IMR-90 (cell line): ENCODE measurements at regions of chr1 and their contacts with region 1.

Region 1: GRCh38 chr1:62676611-62677356 is 11.4 kb downstream of the DOCK7 start:
- DNase-seq: peak; percentile 66
- ATAC-seq: peak; percentile 82
- H3K4me3 ChIP-seq: no peak overlapping the region
- H3K27ac ChIP-seq: peak overlapping the region; percentile 82; the same call in 1 of the 2 replicates
- H3K4me1 ChIP-seq: peaks cover 9% of the 10 kb centered on the region
- H3K27me3 ChIP-seq: no peaks in the 10 kb centered on the region
- CTCF ChIP-seq: no peak
- POLR2A ChIP-seq: no peak
- RAD21 ChIP-seq: no peak

Region 2: DNA sequence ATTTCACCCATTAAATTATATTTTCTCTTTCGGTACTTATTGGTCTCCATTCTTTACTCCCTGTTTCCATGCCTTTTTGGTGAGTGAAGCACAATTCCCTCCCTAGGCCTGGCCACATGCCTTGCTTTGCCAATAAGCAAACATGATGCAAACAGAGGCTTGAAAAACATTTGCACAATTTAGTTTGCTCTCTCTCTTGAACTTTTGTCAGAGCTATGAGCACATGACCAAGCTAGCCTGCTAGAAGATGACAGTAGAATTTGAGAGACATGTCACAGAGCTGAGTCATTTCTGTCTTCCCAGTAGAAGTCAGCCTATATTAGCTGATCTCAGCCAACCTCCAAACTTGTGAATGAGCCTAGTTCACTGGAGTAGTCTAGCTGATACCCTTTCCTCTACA is 54.9 kb before region 1 on chr1:
- CTCF ChIA-PET with region 1: no interaction called
- POLR2A ChIA-PET with region 1: no interaction called
- dilution Hi-C with region 1: no loop called
- in situ Hi-C with region 1: no loop called
- intact Hi-C with region 1: no loop called
- DNase-seq: peak; percentile 95
- ATAC-seq: peak; percentile 94
- H3K4me3 ChIP-seq: no peak overlapping the region
- H3K27ac ChIP-seq: no peak overlapping the region
- H3K4me1 ChIP-seq: peaks cover 5% of the 10 kb centered on the region
- H3K27me3 ChIP-seq: no peaks in the 10 kb centered on the region
- CTCF ChIP-seq: no peak
- POLR2A ChIP-seq: no peak
- RAD21 ChIP-seq: no peak

Region 3: GRCh38 chr1:62774971-62775595 is 98.3 kb after region 1 on chr1:
- CTCF ChIA-PET with region 1: no interaction called
- POLR2A ChIA-PET with region 1: no interaction called
- dilution Hi-C with region 1: no loop called
- in situ Hi-C with region 1: no loop called
- intact Hi-C with region 1: no loop called
- DNase-seq: no peak
- ATAC-seq: no peak
- H3K4me3 ChIP-seq: no peak overlapping the region
- H3K27ac ChIP-seq: no peak overlapping the region
- H3K4me1 ChIP-seq: no peaks in the 10 kb centered on the region
- H3K27me3 ChIP-seq: peaks cover 5% of the 10 kb centered on the region
- CTCF ChIP-seq: no peak
- POLR2A ChIP-seq: no peak
- RAD21 ChIP-seq: no peak

Region 4: DNA sequence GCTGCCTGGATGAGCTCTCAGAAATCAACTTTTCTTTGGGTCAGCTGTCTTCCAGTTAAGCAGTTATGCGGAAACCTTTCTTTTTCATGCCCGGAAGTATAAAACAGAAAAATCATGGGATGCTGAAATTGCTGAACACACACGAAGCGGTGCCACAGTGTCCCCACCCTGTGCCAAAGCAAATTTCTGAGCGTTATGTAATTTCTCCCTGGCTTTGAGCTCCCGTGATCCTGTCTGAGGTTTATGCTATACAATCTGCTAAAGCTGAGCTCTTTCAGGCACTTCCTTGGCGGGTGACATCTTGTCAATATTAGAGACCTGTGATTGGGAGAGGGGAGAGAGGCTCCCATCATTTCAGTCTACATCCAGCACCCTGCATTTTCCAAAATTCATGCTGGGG is 1298.7 kb after region 1 on chr1:
- CTCF ChIA-PET with region 1: no interaction called
- POLR2A ChIA-PET with region 1: interaction called, 11 read pairs
- dilution Hi-C with region 1: no loop called
- in situ Hi-C with region 1: no loop called
- intact Hi-C with region 1: no loop called
- DNase-seq: no peak
- ATAC-seq: no peak
- H3K4me3 ChIP-seq: no peak overlapping the region
- H3K27ac ChIP-seq: no peak overlapping the region
- H3K4me1 ChIP-seq: no peaks in the 10 kb centered on the region
- H3K27me3 ChIP-seq: no peaks in the 10 kb centered on the region; the same call in 1 of the 2 replicates
- CTCF ChIP-seq: no peak
- POLR2A ChIP-seq: no peak
- RAD21 ChIP-seq: no peak